PC-3 (cell line): ENCODE measurements at regions of chr1 and their contacts with region 1.

Region 1: GRCh38 chr1:14653461-14653960 is 55.0 kb downstream of the KAZN start:
- DNase-seq: peak; percentile 85
- ATAC-seq: peak; percentile 43
- H3K4me3 ChIP-seq: no peak overlapping the region
- H3K27ac ChIP-seq: peak overlapping the region; percentile 83
- H3K4me1 ChIP-seq: peaks cover 45% of the 10 kb centered on the region
- H3K27me3 ChIP-seq: no peaks in the 10 kb centered on the region
- CTCF ChIP-seq: no peak

Region 2: DNA sequence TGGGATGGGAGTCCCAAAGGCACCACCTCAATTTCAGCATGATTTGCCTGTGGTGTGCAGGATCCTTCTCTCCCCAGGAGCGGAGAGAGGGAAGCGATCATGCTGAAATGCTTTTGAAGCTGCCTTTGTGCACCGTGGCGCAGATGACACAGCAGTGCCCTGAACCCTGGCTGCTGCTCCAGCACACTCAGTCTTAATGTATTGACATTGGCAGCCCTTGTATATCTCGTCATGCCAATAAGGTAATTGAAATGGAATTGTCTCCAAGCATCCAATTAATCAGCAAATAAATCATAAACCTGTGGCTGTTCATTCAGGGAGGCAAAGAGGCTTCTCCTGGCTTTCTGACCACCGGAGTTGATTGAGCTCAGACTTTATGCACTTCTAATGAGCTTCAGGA is 84.7 kb after region 1 on chr1:
- CTCF ChIA-PET with region 1: no interaction called
- POLR2A ChIA-PET with region 1: no interaction called
- intact Hi-C with region 1: loop called (anchors 5 kb)
- DNase-seq: peak; percentile 88
- ATAC-seq: peak; percentile 81
- H3K4me3 ChIP-seq: peak overlapping the region; percentile 25; the same call in 1 of the 2 replicates
- H3K27ac ChIP-seq: peak overlapping the region; percentile 83
- H3K4me1 ChIP-seq: peaks cover 45% of the 10 kb centered on the region
- H3K27me3 ChIP-seq: no peaks in the 10 kb centered on the region
- CTCF ChIP-seq: no peak